Endothelial cell of umbilical vein (primary cell): ENCODE measurements at regions of chr22 and their contacts with region 1.

Region 1: GRCh38 chr22:36065775-36066559 is 37.3 kb upstream of the RBFOX2 start:
- DNase-seq: peak; percentile 95
- H3K4me3 ChIP-seq: peak overlapping the region; percentile 22 to 69 (median 37)
- H3K27ac ChIP-seq: peak overlapping the region; percentile 54
- H3K4me1 ChIP-seq: peaks cover 9% of the 10 kb centered on the region
- H3K27me3 ChIP-seq: no peaks in the 10 kb centered on the region
- CTCF ChIP-seq: peak; percentile 94 to 100
- POLR2A ChIP-seq: peak; percentile 91

Region 2: GRCh38 chr22:35622191-35622913 is 443.6 kb before region 1 on chr22:
- CTCF ChIA-PET with region 1: interaction called, 19 read pairs
- POLR2A ChIA-PET with region 1: no interaction called
- dilution Hi-C with region 1: no loop called
- intact Hi-C with region 1: loop called (anchors 1 kb)
- DNase-seq: no peak
- H3K4me3 ChIP-seq: no peak overlapping the region
- H3K27ac ChIP-seq: no peak overlapping the region
- H3K4me1 ChIP-seq: no peaks in the 10 kb centered on the region
- H3K27me3 ChIP-seq: peaks cover 3 to 4% of the 10 kb centered on the region in 2 experiments
- CTCF ChIP-seq: no peak
- POLR2A ChIP-seq: no peak

Region 3: DNA sequence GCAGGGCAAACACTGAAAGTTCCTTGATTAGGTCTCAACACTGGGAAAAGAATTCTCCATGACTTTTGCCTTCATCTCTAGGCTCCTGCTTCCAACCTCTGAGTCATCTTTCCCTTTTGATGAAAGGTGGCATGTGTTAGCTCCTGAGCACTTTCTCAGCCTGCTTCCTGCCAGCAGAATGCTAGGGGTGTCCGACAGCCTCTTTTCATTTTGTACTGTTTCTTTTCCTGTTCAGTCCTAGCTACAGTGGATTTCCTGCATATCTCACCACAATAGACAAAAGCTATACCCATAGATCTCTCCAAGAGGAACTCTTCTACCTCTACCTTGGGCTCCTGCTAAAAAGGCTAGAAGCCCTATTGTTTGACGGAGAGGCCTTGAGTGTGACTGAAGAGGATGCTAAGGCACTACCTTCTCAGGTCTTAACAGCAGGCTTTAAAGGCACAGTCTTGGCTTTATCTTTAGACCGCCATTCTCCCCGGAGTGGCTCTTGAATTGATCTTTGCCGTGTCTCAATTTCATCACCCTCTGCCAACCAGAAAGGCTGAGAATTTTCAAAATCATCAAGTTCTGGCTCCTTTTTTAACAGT is 182.8 kb before region 1 on chr22:
- CTCF ChIA-PET with region 1: no interaction called
- POLR2A ChIA-PET with region 1: no interaction called
- dilution Hi-C with region 1: no loop called
- intact Hi-C with region 1: no loop called
- DNase-seq: peak; percentile 78
- H3K4me3 ChIP-seq: peak overlapping the region in 1 of 3 experiments; percentile 17
- H3K27ac ChIP-seq: peak overlapping the region; percentile 70
- H3K4me1 ChIP-seq: peaks cover 18% of the 10 kb centered on the region
- H3K27me3 ChIP-seq: no peaks in the 10 kb centered on the region
- CTCF ChIP-seq: no peak
- POLR2A ChIP-seq: no peak

Region 4: DNA sequence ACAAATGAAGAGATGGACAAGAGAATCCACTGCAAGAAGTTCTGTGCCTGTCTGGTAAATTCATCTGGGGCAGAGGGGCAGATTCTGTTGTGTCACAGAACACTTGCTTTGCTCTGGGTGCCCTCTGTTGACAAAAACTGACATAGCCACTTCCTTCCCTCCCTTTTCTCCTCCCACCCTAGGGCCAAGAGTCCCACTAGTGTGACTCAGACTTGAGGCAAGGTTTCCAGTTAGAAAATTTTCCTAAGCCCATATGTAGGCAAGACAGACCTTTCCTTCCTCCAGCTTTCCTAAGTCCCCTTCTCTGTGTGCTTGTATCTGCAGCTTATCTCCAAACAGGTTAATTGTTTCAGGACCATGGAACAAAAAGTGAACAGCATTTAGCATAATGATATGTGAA is 144.2 kb before region 1 on chr22:
- CTCF ChIA-PET with region 1: interaction called, 17 read pairs
- POLR2A ChIA-PET with region 1: no interaction called
- dilution Hi-C with region 1: no loop called
- intact Hi-C with region 1: no loop called
- DNase-seq: peak; percentile 90
- H3K4me3 ChIP-seq: no peak overlapping the region
- H3K27ac ChIP-seq: peak overlapping the region; percentile 35
- H3K4me1 ChIP-seq: peaks cover 10% of the 10 kb centered on the region
- H3K27me3 ChIP-seq: no peaks in the 10 kb centered on the region
- CTCF ChIP-seq: peak; percentile 48 to 53
- POLR2A ChIP-seq: no peak

Region 5: GRCh38 chr22:35961480-35962295 is 104.3 kb before region 1 on chr22:
- CTCF ChIA-PET with region 1: interaction called, 17 read pairs
- POLR2A ChIA-PET with region 1: interaction called, 3 read pairs
- dilution Hi-C with region 1: no loop called
- intact Hi-C with region 1: no loop called
- DNase-seq: peak; percentile 85
- H3K4me3 ChIP-seq: peak overlapping the region in 1 of 3 experiments; percentile 52
- H3K27ac ChIP-seq: peak overlapping the region; percentile 89
- H3K4me1 ChIP-seq: peaks cover 36% of the 10 kb centered on the region
- H3K27me3 ChIP-seq: no peaks in the 10 kb centered on the region
- CTCF ChIP-seq: no peak
- POLR2A ChIP-seq: no peak

Region 6: GRCh38 chr22:36015811-36016529 is 50.0 kb before region 1 on chr22:
- CTCF ChIA-PET with region 1: interaction called, 17 read pairs
- POLR2A ChIA-PET with region 1: no interaction called
- dilution Hi-C with region 1: no loop called
- intact Hi-C with region 1: no loop called
- DNase-seq: no peak
- H3K4me3 ChIP-seq: no peak overlapping the region
- H3K27ac ChIP-seq: no peak overlapping the region
- H3K4me1 ChIP-seq: peaks cover 3% of the 10 kb centered on the region
- H3K27me3 ChIP-seq: no peaks in the 10 kb centered on the region
- CTCF ChIP-seq: no peak
- POLR2A ChIP-seq: no peak

Region 7: DNA sequence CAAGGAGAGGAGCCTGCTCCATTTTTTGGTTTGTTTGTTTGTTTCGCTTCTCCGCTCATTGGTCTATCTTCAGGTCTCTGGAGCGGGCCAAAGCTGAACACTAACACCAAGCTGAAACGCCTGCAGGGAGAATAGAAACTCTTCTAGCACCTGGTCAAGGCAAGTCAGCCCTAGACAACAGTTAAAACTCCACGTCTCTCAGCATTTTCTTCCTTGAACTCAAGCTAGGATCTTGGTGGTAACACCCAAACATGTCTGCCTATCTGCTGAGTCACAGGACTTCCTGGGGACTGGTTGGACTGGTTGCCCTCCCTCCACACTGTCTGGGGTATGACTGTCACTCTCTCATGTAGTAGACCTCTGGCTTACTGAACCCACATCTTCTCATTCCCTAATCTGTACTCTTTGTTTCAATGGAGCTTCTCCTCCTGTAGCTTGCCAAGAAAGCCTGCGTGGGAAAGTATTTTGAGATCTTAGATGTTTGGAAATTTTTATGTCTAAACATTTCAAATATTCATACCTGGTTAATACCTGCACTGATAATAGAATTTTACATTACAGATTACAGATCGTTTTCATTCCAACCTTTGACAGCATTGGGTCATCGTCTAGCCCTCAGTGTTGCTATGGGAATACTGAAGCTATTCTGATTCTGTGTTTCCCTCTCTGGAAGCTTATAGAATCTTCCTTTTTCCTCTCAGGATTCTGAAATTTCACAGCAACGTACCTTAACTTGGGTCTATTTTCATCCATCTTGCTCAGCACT is 13.3 kb before region 1 on chr22:
- CTCF ChIA-PET with region 1: interaction called, 29 read pairs
- POLR2A ChIA-PET with region 1: interaction called, 8 read pairs
- dilution Hi-C with region 1: no loop called
- intact Hi-C with region 1: no loop called
- DNase-seq: no peak
- H3K4me3 ChIP-seq: no peak overlapping the region
- H3K27ac ChIP-seq: no peak overlapping the region
- H3K4me1 ChIP-seq: no peaks in the 10 kb centered on the region
- H3K27me3 ChIP-seq: no peaks in the 10 kb centered on the region
- CTCF ChIP-seq: no peak
- POLR2A ChIP-seq: no peak

Region 8: GRCh38 chr22:36180038-36180880 is 114.3 kb after region 1 on chr22:
- CTCF ChIA-PET with region 1: interaction called, 7 read pairs
- POLR2A ChIA-PET with region 1: no interaction called
- dilution Hi-C with region 1: no loop called
- intact Hi-C with region 1: loop called (anchors 1 kb)
- DNase-seq: peak; percentile 71
- H3K4me3 ChIP-seq: no peak overlapping the region
- H3K27ac ChIP-seq: no peak overlapping the region
- H3K4me1 ChIP-seq: no peaks in the 10 kb centered on the region
- H3K27me3 ChIP-seq: no peaks in the 10 kb centered on the region
- CTCF ChIP-seq: peak; percentile 84 to 92
- POLR2A ChIP-seq: no peak

Region 9: DNA sequence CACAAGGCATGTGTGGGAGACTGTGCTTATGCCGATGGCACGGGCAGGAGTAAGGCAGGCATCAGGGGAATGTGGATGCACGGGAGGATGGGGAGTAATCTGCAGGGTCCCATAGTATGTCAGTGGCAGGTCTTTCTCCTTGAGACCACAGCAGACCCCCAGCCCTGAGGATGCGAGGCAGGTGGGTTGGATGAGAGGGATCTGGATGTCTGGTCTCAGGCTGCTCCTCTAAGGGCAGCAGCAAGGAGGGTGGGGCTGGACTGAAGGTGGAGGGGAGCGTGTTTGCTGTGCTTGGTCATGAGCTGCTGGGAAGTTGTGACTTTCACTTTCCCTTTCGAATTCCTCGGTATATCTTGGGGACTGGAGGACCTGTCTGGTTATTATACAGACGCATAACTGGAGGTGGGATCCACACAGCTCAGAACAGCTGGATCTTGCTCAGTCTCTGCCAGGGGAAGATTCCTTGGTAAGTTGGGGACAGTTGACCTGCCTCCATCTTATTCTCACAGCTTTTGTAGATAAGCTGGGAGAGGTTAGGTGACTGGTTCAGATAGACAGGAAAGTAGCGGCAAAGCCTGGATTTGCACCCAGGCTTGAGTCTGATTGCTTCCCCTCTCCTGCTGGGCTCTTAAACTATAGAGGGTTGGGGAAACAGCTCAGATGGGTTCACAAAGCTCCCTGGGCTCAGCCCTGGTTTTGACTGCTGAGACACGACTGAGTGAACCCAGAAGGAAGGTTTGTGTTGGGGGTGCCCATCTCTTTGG is 187.0 kb after region 1 on chr22 and contains the start of gene APOL1:
- CTCF ChIA-PET with region 1: no interaction called
- POLR2A ChIA-PET with region 1: no interaction called
- dilution Hi-C with region 1: no loop called
- intact Hi-C with region 1: no loop called
- DNase-seq: peak; percentile 69
- H3K4me3 ChIP-seq: peak within 1 kb of the TSS; percentile 32 to 53 (median 42)
- H3K27ac ChIP-seq: no peak within 1 kb of the TSS
- H3K4me1 ChIP-seq: peaks cover 13% of the 10 kb centered on the region
- H3K27me3 ChIP-seq: no peaks in the 10 kb centered on the region
- CTCF ChIP-seq: no peak
- POLR2A ChIP-seq: no peak
- total RNA-seq, gene APOL1: 9.3 and 14.1 TPM in 2 replicates